CD4-positive, alpha-beta T cell (primary cell): ENCODE measurements at regions of chr3 and their contacts with region 1.

Region 1: GRCh38 chr3:111338059-111338698 is 203.8 kb upstream of the CD96 start:
- DNase-seq: peak in 11 of 14 experiments; percentile 2 to 65 (median 11)
- ATAC-seq: no peak
- H3K4me3 ChIP-seq: no peak overlapping the region
- H3K4me3 Mint-ChIP-seq: no peak overlapping the region
- H3K27ac ChIP-seq: no peak overlapping the region
- H3K27ac Mint-ChIP-seq: no peak overlapping the region
- H3K4me1 ChIP-seq: no peaks in the 10 kb centered on the region
- H3K4me1 Mint-ChIP-seq: peaks cover 14% of the 10 kb centered on the region
- H3K27me3 ChIP-seq: no peaks in the 10 kb centered on the region
- H3K27me3 Mint-ChIP-seq: no peaks in the 10 kb centered on the region
- CTCF ChIP-seq: peak; percentile 57

Region 2: DNA sequence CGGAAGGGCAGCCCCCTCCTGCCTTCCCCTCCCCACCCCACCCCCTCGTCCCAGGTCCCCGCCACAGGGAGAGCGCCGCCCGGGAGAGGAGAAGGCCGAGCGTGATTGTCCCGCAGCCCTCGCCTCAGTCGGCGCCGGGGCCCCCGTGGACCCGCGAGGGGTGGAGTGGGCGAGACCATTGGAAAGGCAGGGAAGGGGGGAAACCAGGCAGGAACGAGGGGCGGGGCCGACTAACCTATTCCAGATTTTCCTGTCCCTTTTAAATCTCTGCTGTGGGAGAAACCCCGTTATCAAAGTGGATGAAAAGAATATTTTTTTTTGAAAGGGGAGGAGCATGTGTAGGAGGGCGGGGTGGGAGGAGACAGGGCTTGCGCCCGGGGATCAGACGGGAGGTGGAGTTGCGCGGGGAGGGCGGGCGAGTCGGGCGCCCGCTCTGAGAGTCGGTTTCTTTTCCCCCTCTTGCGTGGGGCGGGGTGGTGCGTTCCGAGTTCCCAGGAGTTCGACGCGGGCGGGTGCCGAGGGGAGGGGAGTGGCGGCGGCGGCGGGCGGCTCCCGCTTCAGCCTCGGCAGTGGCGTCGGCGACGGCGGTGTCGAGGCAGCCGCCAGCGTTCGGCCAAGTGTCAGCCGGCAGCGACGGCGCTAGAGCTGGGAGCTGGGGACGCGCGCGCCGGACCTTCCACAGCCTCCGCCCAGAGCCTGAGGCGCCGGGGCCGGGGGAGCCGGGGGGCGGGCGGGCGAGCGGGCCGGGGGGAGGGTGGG is 266.7 kb before region 1 on chr3 and contains the start of gene NECTIN3:
- CTCF ChIA-PET with region 1: no interaction called
- POLR2A ChIA-PET with region 1: no interaction called
- intact Hi-C with region 1: loop called in 1 of 2 experiments (anchors 10 kb)
- DNase-seq: peak; percentile 71 to 95 (median 83)
- ATAC-seq: peak; percentile 93
- H3K4me3 ChIP-seq: peak within 1 kb of the TSS; percentile 78
- H3K4me3 Mint-ChIP-seq: peak within 1 kb of the TSS; percentile 97
- H3K27ac ChIP-seq: no peak within 1 kb of the TSS
- H3K27ac Mint-ChIP-seq: peak within 1 kb of the TSS; percentile 90
- H3K4me1 ChIP-seq: peaks cover 19% of the 10 kb centered on the region
- H3K4me1 Mint-ChIP-seq: peaks cover 44% of the 10 kb centered on the region
- H3K27me3 ChIP-seq: peaks cover 0 to 18% of the 10 kb centered on the region in 2 experiments
- H3K27me3 Mint-ChIP-seq: peaks cover 35% of the 10 kb centered on the region
- CTCF ChIP-seq: no peak
- total RNA-seq, gene NECTIN3: 7.8 to 8.5 TPM

Region 3: DNA sequence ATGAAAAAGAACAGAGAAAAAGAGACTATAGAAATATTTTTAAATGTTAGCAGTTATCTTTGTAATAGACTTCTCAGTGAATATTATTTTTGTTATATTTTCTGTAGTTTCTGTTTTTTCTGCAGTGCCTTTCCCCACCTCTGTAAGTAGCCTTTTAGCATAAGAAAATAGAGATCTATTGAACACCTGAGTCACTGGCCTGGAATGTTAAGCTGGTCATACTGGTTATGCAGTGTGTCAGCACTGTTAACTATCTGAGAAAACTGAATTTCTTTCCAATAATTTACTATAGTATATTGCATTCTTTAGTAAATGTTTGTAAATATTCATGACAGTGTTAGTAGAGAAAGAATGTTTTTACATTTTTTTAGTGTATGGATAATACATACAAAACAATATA is 186.7 kb before region 1 on chr3:
- CTCF ChIA-PET with region 1: no interaction called
- POLR2A ChIA-PET with region 1: no interaction called
- intact Hi-C with region 1: loop called in 1 of 2 experiments (anchors 5 kb)
- DNase-seq: no peak
- ATAC-seq: no peak
- H3K4me3 ChIP-seq: no peak overlapping the region
- H3K4me3 Mint-ChIP-seq: no peak overlapping the region
- H3K27ac ChIP-seq: no peak overlapping the region
- H3K27ac Mint-ChIP-seq: no peak overlapping the region
- H3K4me1 ChIP-seq: no peaks in the 10 kb centered on the region
- H3K4me1 Mint-ChIP-seq: no peaks in the 10 kb centered on the region
- H3K27me3 ChIP-seq: no peaks in the 10 kb centered on the region
- H3K27me3 Mint-ChIP-seq: no peaks in the 10 kb centered on the region
- CTCF ChIP-seq: no peak

Region 4: GRCh38 chr3:111210003-111210711 is 128.0 kb before region 1 on chr3:
- CTCF ChIA-PET with region 1: no interaction called
- POLR2A ChIA-PET with region 1: no interaction called
- intact Hi-C with region 1: loop called in 1 of 2 experiments (anchors 5 kb)
- DNase-seq: peak in 1 of 14 experiments; percentile 4
- ATAC-seq: no peak
- H3K4me3 ChIP-seq: no peak overlapping the region
- H3K4me3 Mint-ChIP-seq: no peak overlapping the region
- H3K27ac ChIP-seq: no peak overlapping the region
- H3K27ac Mint-ChIP-seq: no peak overlapping the region
- H3K4me1 ChIP-seq: no peaks in the 10 kb centered on the region
- H3K4me1 Mint-ChIP-seq: no peaks in the 10 kb centered on the region
- H3K27me3 ChIP-seq: no peaks in the 10 kb centered on the region
- H3K27me3 Mint-ChIP-seq: no peaks in the 10 kb centered on the region
- CTCF ChIP-seq: no peak